Activated B cell treated with CpG ODN at 0.5 μM for 24 hours (primary cell): ENCODE measurements at regions of chr14 and their contacts with region 1.

Region 1: GRCh38 chr14:76962303-76962660 is 66.2 kb downstream of the IRF2BPL start:
- DNase-seq: no peak
- ATAC-seq: no peak
- H3K4me3 Mint-ChIP-seq: peak overlapping the region; percentile 84
- H3K27ac Mint-ChIP-seq: peak overlapping the region; percentile 94
- H3K4me1 Mint-ChIP-seq: peaks cover 78% of the 10 kb centered on the region
- H3K27me3 Mint-ChIP-seq: no peaks in the 10 kb centered on the region
- CTCF ChIP-seq: no peak

Region 2: DNA sequence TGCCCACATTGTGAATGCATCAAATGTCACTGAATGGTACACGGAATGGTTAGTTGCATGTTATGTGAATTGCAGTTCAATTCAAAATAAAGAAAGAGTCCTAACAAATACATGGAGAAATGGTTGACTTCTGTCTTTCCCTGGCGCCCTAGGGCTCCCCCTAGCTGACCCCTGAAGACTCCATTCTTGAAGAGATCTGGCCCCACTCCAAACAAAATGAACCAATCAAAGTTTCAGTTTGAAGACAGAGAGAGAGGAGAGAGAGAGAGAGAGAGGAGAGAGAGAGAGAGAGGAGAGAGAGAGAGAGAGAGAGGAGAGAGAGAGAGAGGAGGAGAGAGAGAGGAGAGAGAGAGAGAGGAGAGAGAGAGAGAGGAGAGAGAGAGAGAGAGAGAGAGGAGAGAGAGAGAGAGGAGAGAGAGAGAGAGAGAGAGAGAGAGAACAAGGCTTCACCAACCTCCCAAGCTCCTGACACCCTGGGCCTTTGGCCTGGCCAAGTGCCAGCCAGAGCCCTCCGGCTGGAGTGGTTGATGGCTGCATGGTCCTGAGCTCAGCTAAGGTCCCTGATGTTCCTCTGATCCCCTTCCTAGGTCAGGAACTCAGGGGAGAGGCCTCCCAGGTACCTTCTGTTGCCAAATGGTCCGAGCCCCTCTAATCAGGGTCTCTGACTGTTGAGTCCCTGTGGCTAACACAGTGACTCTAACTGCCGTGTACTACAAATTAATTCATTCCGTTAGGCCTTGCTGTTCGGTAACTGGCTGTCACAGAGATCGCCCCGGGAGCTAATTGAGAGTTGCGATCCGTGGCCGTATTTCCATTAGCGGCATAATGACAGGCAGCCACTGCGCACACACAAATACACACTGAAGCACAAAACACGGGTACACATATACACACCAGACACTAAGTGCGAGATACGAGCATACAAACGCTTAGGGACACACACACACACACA is 397.5 kb before region 1 on chr14:
- CTCF ChIA-PET with region 1: no interaction called
- POLR2A ChIA-PET with region 1: no interaction called
- intact Hi-C with region 1: no loop called
- DNase-seq: no peak
- ATAC-seq: no peak
- H3K4me3 Mint-ChIP-seq: no peak overlapping the region
- H3K27ac Mint-ChIP-seq: no peak overlapping the region
- H3K4me1 Mint-ChIP-seq: no peaks in the 10 kb centered on the region
- H3K27me3 Mint-ChIP-seq: peaks cover 5% of the 10 kb centered on the region
- CTCF ChIP-seq: no peak

Region 3: GRCh38 chr14:76904740-76905438 is 57.4 kb before region 1 on chr14:
- CTCF ChIA-PET with region 1: no interaction called
- POLR2A ChIA-PET with region 1: interaction called, 21 read pairs
- intact Hi-C with region 1: loop called (anchors 1 kb)
- DNase-seq: peak; percentile 73
- ATAC-seq: peak; percentile 92
- H3K4me3 Mint-ChIP-seq: peak overlapping the region; percentile 63
- H3K27ac Mint-ChIP-seq: peak overlapping the region; percentile 93
- H3K4me1 Mint-ChIP-seq: peaks cover 39% of the 10 kb centered on the region
- H3K27me3 Mint-ChIP-seq: no peaks in the 10 kb centered on the region
- CTCF ChIP-seq: no peak

Region 4: GRCh38 chr14:76947078-76947837 is 15.0 kb before region 1 on chr14:
- CTCF ChIA-PET with region 1: interaction called, 13 read pairs
- POLR2A ChIA-PET with region 1: interaction called, 24 read pairs
- intact Hi-C with region 1: loop called (anchors 1 kb)
- DNase-seq: peak; percentile 69
- ATAC-seq: peak; percentile 93
- H3K4me3 Mint-ChIP-seq: peak overlapping the region; percentile 19
- H3K27ac Mint-ChIP-seq: no peak overlapping the region
- H3K4me1 Mint-ChIP-seq: peaks cover 19% of the 10 kb centered on the region
- H3K27me3 Mint-ChIP-seq: no peaks in the 10 kb centered on the region
- CTCF ChIP-seq: no peak

Region 5: DNA sequence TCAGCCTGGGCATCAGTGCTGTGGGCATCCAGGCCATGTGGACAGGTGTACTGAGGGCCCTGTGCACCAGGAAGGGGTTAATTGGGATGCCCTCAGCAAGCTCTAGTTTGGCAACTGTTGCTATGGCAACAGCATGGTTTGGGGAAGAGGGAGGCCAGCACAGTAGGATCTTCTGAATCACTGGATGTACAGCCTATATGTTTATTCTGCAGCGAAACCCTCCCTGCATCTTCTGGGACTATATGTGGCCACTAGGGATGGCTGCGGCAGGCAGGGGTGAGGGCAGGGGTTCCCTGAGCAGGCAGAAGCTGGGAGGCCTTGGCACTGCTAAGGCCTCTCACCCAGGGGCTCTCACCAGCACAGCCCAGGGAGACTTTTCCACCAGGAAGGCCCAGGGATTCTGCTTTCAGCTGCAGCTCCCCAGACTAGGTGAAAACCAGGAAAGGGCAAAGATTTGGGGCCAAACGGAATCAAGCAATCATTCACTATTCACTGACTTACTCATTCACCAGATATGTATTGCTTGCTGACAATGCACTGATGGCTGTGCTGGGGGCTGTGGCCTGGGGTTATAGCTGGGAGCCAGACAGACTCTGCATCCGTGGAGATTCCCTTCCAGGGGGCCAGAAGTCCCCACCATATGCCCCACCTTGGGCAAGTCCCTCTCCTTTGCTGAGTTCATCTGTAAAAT is 23.4 kb after region 1 on chr14:
- CTCF ChIA-PET with region 1: no interaction called
- POLR2A ChIA-PET with region 1: interaction called, 11 read pairs
- intact Hi-C with region 1: no loop called
- DNase-seq: no peak
- ATAC-seq: no peak
- H3K4me3 Mint-ChIP-seq: no peak overlapping the region
- H3K27ac Mint-ChIP-seq: no peak overlapping the region
- H3K4me1 Mint-ChIP-seq: peaks cover 7% of the 10 kb centered on the region
- H3K27me3 Mint-ChIP-seq: no peaks in the 10 kb centered on the region
- CTCF ChIP-seq: no peak

Region 6: GRCh38 chr14:77033622-77034521 is 71.6 kb after region 1 on chr14:
- CTCF ChIA-PET with region 1: interaction called, 7 read pairs
- POLR2A ChIA-PET with region 1: interaction called, 149 read pairs
- intact Hi-C with region 1: no loop called
- DNase-seq: peak; percentile 74
- ATAC-seq: peak; percentile 82
- H3K4me3 Mint-ChIP-seq: peak overlapping the region; percentile 88
- H3K27ac Mint-ChIP-seq: peak overlapping the region; percentile 97
- H3K4me1 Mint-ChIP-seq: peaks cover 67% of the 10 kb centered on the region
- H3K27me3 Mint-ChIP-seq: no peaks in the 10 kb centered on the region
- CTCF ChIP-seq: no peak